ENCODE measurements at regions of chr7 and their contacts with region 1.

Region 1: DNA sequence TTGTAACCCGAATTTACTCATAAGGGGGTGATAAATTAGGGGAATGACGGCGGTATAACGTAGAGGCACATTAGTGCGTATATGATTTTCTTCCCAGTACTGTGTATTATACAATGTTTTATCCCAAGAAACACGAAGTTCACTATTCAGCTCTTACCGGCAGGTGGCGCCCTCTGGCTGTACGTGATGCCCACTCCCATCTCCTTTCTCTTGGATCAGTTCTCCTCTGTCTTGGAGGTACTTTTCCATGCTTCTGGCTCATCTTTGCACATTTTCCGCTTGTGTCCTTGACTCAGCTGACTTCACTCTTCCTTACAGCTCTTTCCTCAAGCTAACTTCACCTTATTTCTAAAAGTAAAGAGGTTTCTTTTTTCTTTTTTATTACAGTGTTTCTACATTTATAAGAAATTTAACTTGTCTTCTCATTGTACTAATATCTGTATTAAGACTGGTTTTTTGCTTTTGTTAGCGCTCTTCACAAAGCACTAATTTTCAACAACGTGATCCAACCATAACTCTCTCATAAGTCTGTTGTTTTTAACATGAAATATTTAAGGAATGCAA is 21.3 kb downstream of the TMEM176B start:
- DNase-seq: peak; percentile 76
- ATAC-seq: peak; percentile 57
- H3K4me3 Mint-ChIP-seq: no peak overlapping the region
- H3K27ac Mint-ChIP-seq: no peak overlapping the region
- H3K4me1 Mint-ChIP-seq: peaks cover 4% of the 10 kb centered on the region
- H3K27me3 Mint-ChIP-seq: peaks cover 28% of the 10 kb centered on the region

Region 2: DNA sequence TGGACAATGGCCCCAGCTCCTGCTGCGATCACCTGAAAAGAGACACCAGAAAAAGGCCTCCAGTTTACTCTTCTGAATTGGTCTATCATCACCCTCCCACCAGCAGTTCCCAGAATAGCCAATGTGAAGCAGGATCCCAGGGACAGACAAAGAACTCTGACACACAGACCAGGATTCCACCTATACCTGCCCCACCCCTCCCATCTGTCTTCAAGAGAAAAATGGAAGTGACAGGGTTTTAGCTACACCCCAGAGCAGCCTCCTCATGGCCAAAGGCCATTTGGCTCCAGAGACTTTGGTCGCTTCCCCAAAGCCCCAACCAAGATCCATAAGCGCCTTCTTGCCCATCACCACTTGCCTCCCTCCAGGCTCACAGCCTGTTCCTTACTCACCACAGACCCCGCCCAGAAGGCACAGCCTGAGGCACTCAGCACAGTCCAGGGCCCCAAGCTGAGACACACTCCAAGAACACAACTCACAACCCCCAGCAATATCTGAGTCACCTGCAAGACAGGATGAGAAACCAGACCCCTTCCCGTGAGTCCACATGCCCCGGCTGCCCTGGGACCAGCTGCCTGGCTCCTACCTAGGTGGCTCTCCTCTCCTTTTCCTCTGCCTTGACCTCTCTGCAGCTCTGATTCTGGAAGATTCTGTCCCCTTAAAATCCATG is 14.9 kb after region 1 on chr7:
- CTCF ChIA-PET with region 1: interaction called, 14 read pairs
- POLR2A ChIA-PET with region 1: no interaction called
- DNase-seq: no peak
- ATAC-seq: no peak
- H3K4me3 Mint-ChIP-seq: no peak overlapping the region
- H3K27ac Mint-ChIP-seq: no peak overlapping the region
- H3K4me1 Mint-ChIP-seq: no peaks in the 10 kb centered on the region
- H3K27me3 Mint-ChIP-seq: peaks cover 20% of the 10 kb centered on the region

Measured in activated CD8-positive, alpha-beta T cell treated with anti-CD3 and anti-CD28 coated beads, Interleukin-2, amount 10 ng/mL, durations not matched to agents 7 days and 5 days (primary cell).